Activated CD4-positive, alpha-beta memory T cell treated with anti-CD3 and anti-CD28 coated beads for 36 hours (primary cell): ENCODE measurements at regions of chr2 and their contacts with region 1.

Region 1: DNA sequence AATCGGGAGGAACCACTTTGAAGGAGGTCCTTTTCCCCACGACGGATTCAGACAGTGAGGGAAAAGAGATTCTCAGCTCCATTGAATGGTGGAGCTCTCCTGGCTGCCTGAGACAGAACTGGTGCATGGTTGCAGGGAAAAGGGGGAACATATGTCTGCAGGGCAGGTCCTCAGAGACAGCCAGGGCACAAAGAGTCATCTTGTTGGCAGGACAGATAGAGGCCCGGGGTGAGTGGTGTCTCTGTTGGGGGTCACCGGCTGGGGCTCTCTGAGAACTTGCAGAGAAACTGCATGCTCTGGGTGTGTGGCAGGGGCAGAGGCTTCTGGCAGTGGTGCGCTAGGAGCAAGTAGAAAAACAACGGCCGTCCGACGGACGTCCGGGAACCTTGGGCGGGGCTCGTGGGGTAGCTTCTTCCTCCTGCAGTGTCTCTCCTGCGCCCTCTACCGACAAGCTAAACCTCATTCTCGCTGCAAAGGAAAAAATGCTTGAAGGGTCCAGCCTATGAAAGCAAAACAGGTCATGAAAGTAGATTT is 94.3 kb downstream of the CDCA7 start:
- DNase-seq: peak; percentile 82
- H3K4me3 Mint-ChIP-seq: peak overlapping the region; percentile 57
- H3K27ac Mint-ChIP-seq: no peak overlapping the region
- H3K4me1 Mint-ChIP-seq: peaks cover 16% of the 10 kb centered on the region
- H3K27me3 Mint-ChIP-seq: peaks cover 8% of the 10 kb centered on the region

Region 2: DNA sequence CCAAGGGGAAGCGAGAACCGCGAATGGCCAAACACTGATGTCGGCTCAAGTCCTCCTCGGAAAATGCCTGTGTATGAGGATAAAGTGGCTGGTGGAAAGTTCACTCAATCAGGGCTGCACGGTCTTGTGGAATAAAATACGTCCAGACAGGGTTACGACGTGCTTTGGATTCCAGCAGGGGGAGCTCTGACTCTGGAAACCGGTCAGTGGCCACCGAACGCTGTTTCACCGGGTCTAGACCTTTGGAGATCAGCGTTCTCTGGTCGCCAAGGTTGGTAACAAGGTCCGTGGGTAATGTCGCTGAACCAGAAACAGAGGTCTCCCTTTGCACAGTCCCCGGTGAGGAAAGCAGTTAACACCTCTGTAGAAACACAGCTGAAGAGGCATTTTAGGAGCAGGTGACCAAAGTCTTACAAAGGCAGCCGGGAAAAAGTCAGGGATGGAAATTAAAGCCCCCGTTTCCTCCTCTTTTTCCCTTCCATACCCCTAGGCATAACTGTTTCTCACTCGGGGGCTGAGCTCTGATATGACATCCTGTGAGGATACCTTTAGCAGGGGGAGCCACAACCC is 46.5 kb before region 1 on chr2:
- CTCF ChIA-PET with region 1: interaction called, 52 read pairs
- POLR2A ChIA-PET with region 1: no interaction called
- intact Hi-C with region 1: loop called (anchors 1 kb)
- DNase-seq: peak; percentile 81
- H3K4me3 Mint-ChIP-seq: no peak overlapping the region
- H3K27ac Mint-ChIP-seq: no peak overlapping the region
- H3K4me1 Mint-ChIP-seq: peaks cover 4% of the 10 kb centered on the region
- H3K27me3 Mint-ChIP-seq: peaks cover 44% of the 10 kb centered on the region

Region 3: GRCh38 chr2:173652767-173653431 is 203.9 kb after region 1 on chr2:
- CTCF ChIA-PET with region 1: no interaction called
- POLR2A ChIA-PET with region 1: no interaction called
- intact Hi-C with region 1: no loop called
- DNase-seq: no peak
- H3K4me3 Mint-ChIP-seq: no peak overlapping the region
- H3K27ac Mint-ChIP-seq: no peak overlapping the region
- H3K4me1 Mint-ChIP-seq: no peaks in the 10 kb centered on the region
- H3K27me3 Mint-ChIP-seq: peaks cover 6% of the 10 kb centered on the region